ENCODE measurements at regions of chr1 and their contacts with region 1.

Region 1: DNA sequence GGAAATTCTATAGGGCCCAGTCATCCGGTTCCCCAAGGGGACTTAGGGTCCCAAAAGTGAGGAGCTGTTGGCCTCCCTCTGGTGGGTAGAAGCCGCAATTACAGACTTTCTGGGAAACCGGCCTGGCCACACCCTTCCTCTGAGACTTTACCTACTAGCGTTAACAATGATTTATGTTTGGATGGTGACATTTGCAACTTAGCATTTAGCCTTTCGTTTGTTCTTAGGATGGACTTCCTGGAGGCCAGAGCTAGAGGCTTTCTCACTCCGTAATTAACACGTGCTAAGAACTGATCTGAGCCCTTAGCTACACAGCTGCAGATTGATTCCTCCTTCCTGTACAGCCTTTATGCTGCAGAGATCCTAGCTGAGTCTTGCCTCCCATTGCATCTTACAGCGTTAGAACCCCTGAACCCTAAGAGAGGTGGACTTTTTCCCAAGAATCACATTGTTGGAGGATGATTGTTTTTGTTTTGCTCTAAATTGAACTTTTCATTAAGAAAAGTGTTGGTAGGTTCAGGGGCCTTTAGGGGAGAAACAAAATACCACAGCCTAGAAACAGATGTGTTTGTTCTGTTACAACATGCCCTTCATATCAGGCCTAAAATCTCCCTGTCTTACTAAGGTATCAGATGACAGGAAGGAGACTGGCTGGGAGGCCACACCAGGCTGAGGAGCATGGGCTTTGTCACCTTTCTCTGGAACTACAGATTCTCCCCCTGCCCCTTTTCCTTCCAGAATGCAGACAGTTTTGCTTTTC is 2.0 kb downstream of the S100A11 start:
- DNase-seq: peak; percentile 89
- H3K4me3 Mint-ChIP-seq: peak overlapping the region; percentile 84
- H3K27ac Mint-ChIP-seq: peak overlapping the region; percentile 86
- H3K4me1 Mint-ChIP-seq: peaks cover 28% of the 10 kb centered on the region
- H3K27me3 Mint-ChIP-seq: no peaks in the 10 kb centered on the region
- CTCF ChIP-seq: peak; percentile 99

Region 2: GRCh38 chr1:151939779-151940178 is 95.0 kb before region 1 on chr1:
- CTCF ChIA-PET with region 1: interaction called, 12 read pairs
- POLR2A ChIA-PET with region 1: interaction called, 52 read pairs
- intact Hi-C with region 1: loop called (anchors 1 kb)
- DNase-seq: no peak
- H3K4me3 Mint-ChIP-seq: no peak overlapping the region
- H3K27ac Mint-ChIP-seq: no peak overlapping the region
- H3K4me1 Mint-ChIP-seq: peaks cover 13% of the 10 kb centered on the region
- H3K27me3 Mint-ChIP-seq: no peaks in the 10 kb centered on the region
- CTCF ChIP-seq: no peak

Region 3: GRCh38 chr1:151976858-151977257 is 58.0 kb before region 1 on chr1:
- CTCF ChIA-PET with region 1: interaction called, 4 read pairs
- POLR2A ChIA-PET with region 1: interaction called, 13 read pairs
- intact Hi-C with region 1: no loop called
- DNase-seq: peak; percentile 82
- H3K4me3 Mint-ChIP-seq: no peak overlapping the region
- H3K27ac Mint-ChIP-seq: peak overlapping the region; percentile 62
- H3K4me1 Mint-ChIP-seq: peaks cover 71% of the 10 kb centered on the region
- H3K27me3 Mint-ChIP-seq: no peaks in the 10 kb centered on the region
- CTCF ChIP-seq: no peak

Region 4: DNA sequence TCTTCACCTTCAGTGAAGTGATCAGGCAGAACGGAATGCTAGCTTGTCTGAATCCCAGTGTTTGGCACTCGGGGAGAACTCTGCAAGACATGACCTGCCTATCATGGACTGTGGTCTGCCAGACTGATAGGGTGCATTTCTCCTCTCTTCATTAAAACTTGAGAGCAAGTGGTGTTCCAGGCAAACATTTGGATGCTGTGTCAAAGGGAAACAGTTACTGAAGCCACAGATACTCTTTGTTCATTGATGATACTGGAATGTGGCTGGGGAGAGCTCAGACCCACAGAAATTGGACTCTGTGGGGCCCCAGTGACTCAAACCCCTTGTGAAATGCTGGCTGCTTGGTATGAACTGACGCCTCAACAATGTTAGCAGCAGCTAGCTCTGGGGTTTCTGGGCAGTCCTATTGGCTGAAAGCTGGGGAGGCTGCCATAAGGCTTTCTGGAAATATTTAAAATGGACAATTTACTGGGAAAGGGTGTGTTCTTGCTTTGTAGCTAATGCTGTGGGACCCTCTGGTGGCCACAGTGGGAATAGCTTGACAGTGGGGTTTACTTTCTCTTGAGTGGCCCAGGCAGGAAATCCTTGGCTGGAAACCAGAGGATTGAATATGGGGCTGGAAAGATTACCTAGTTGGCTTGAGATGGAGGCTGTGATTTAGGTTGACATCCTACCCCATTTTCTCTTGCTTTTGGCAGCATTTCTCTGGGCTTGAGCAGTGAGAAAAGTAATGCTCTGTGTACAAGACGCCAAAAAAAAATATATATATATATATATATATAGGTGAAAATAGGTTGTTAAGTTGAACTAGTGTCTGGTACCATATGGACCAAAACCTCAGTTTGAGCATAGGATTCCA is 33.2 kb before region 1 on chr1:
- CTCF ChIA-PET with region 1: interaction called, 54 read pairs
- POLR2A ChIA-PET with region 1: interaction called, 218 read pairs
- intact Hi-C with region 1: no loop called
- DNase-seq: peak; percentile 96
- H3K4me3 Mint-ChIP-seq: peak overlapping the region; percentile 28
- H3K27ac Mint-ChIP-seq: peak overlapping the region; percentile 33
- H3K4me1 Mint-ChIP-seq: peaks cover 55% of the 10 kb centered on the region
- H3K27me3 Mint-ChIP-seq: no peaks in the 10 kb centered on the region
- CTCF ChIP-seq: peak; percentile 98

Region 5: GRCh38 chr1:152047730-152048402 is 13.0 kb after region 1 on chr1:
- CTCF ChIA-PET with region 1: interaction called, 84 read pairs
- POLR2A ChIA-PET with region 1: interaction called, 622 read pairs
- intact Hi-C with region 1: loop called (anchors 1 kb)
- DNase-seq: peak; percentile 100
- H3K4me3 Mint-ChIP-seq: peak overlapping the region; percentile 62
- H3K27ac Mint-ChIP-seq: peak overlapping the region; percentile 98
- H3K4me1 Mint-ChIP-seq: peaks cover 55% of the 10 kb centered on the region
- H3K27me3 Mint-ChIP-seq: no peaks in the 10 kb centered on the region
- CTCF ChIP-seq: peak; percentile 58

Region 6: GRCh38 chr1:152141974-152142584 is 107.3 kb after region 1 on chr1:
- CTCF ChIA-PET with region 1: interaction called, 3 read pairs
- POLR2A ChIA-PET with region 1: interaction called, 12 read pairs
- intact Hi-C with region 1: no loop called
- DNase-seq: peak; percentile 94
- H3K4me3 Mint-ChIP-seq: no peak overlapping the region
- H3K27ac Mint-ChIP-seq: no peak overlapping the region
- H3K4me1 Mint-ChIP-seq: peaks cover 8% of the 10 kb centered on the region
- H3K27me3 Mint-ChIP-seq: peaks cover 8% of the 10 kb centered on the region
- CTCF ChIP-seq: peak; percentile 93

Region 7: GRCh38 chr1:152189657-152190442 is 155.0 kb after region 1 on chr1:
- CTCF ChIA-PET with region 1: interaction called, 34 read pairs
- POLR2A ChIA-PET with region 1: interaction called, 72 read pairs
- intact Hi-C with region 1: no loop called
- DNase-seq: peak; percentile 90
- H3K4me3 Mint-ChIP-seq: peak overlapping the region; percentile 60
- H3K27ac Mint-ChIP-seq: peak overlapping the region; percentile 1
- H3K4me1 Mint-ChIP-seq: peaks cover 41% of the 10 kb centered on the region
- H3K27me3 Mint-ChIP-seq: peaks cover 11% of the 10 kb centered on the region
- CTCF ChIP-seq: peak; percentile 91

Measured in MCF 10A (cell line).